ENCODE measurements at regions of chr5 and their contacts with region 1.

Region 1: GRCh38 chr5:139197710-139198669 is at the start of gene SIL1:
- DNase-seq: peak; percentile 86 to 99 (median 96)
- ATAC-seq: peak; percentile 99
- H3K4me3 ChIP-seq: peak within 1 kb of the TSS; percentile 83
- H3K4me3 Mint-ChIP-seq: peak within 1 kb of the TSS; percentile 85
- H3K27ac ChIP-seq: peak within 1 kb of the TSS; percentile 82 to 86
- H3K27ac Mint-ChIP-seq: peak within 1 kb of the TSS; percentile 77
- H3K4me1 ChIP-seq: peaks cover 17% of the 10 kb centered on the region
- H3K4me1 Mint-ChIP-seq: peaks cover 21% of the 10 kb centered on the region
- H3K27me3 ChIP-seq: no peaks in the 10 kb centered on the region
- H3K27me3 Mint-ChIP-seq: no peaks in the 10 kb centered on the region
- CTCF ChIP-seq: no peak
- total RNA-seq, gene SIL1: 5.6 to 9.2 TPM

Region 2: DNA sequence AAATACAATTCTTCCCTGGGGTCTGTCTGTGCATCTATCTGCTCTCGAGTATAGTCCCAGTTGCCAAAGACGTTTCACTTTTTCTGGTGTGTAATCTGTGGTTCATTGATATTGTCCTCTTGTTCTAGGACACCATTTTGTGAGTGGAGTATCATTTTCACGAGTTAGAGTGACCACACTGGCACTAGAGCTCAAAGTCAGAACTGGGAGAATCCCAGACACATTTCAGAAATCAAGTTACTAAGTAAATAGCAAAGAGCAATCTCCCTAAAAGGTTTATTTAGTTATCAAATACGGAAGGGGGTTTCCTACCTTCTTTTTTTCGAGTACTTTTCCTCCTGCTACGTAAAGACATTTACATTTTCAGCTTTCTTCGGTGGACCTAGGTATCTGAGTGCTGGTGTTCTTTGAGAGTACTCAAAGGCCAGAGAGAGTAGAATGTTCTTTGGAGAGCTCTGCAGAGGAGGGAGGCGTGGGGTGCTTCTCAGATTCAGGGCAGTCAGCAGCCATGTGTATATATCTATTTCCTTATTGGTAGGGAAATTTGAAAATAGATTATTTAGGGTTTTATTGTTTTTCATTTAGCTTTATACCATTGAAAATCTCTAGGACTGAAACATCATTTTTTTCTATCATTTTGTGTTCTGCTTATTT is 613.9 kb before region 1 on chr5:
- CTCF ChIA-PET with region 1: interaction called, 3 read pairs
- POLR2A ChIA-PET with region 1: no interaction called
- intact Hi-C with region 1: loop called in 1 of 2 experiments (anchors 5 kb)
- DNase-seq: no peak
- ATAC-seq: no peak
- H3K4me3 ChIP-seq: no peak overlapping the region
- H3K4me3 Mint-ChIP-seq: no peak overlapping the region
- H3K27ac ChIP-seq: no peak overlapping the region
- H3K27ac Mint-ChIP-seq: no peak overlapping the region
- H3K4me1 ChIP-seq: peaks cover 4% of the 10 kb centered on the region
- H3K4me1 Mint-ChIP-seq: peaks cover 4% of the 10 kb centered on the region
- H3K27me3 ChIP-seq: no peaks in the 10 kb centered on the region
- H3K27me3 Mint-ChIP-seq: peaks cover 20% of the 10 kb centered on the region
- CTCF ChIP-seq: no peak

Region 3: GRCh38 chr5:139181835-139182452 is 16.0 kb before region 1 on chr5:
- CTCF ChIA-PET with region 1: no interaction called
- POLR2A ChIA-PET with region 1: no interaction called
- intact Hi-C with region 1: no loop called
- DNase-seq: peak in 2 of 14 experiments; percentile 22 to 23
- ATAC-seq: no peak
- H3K4me3 ChIP-seq: no peak overlapping the region
- H3K4me3 Mint-ChIP-seq: no peak overlapping the region
- H3K27ac ChIP-seq: no peak overlapping the region
- H3K27ac Mint-ChIP-seq: no peak overlapping the region
- H3K4me1 ChIP-seq: peaks cover 4% of the 10 kb centered on the region
- H3K4me1 Mint-ChIP-seq: peaks cover 4% of the 10 kb centered on the region
- H3K27me3 ChIP-seq: no peaks in the 10 kb centered on the region
- H3K27me3 Mint-ChIP-seq: no peaks in the 10 kb centered on the region
- CTCF ChIP-seq: no peak

Region 4: DNA sequence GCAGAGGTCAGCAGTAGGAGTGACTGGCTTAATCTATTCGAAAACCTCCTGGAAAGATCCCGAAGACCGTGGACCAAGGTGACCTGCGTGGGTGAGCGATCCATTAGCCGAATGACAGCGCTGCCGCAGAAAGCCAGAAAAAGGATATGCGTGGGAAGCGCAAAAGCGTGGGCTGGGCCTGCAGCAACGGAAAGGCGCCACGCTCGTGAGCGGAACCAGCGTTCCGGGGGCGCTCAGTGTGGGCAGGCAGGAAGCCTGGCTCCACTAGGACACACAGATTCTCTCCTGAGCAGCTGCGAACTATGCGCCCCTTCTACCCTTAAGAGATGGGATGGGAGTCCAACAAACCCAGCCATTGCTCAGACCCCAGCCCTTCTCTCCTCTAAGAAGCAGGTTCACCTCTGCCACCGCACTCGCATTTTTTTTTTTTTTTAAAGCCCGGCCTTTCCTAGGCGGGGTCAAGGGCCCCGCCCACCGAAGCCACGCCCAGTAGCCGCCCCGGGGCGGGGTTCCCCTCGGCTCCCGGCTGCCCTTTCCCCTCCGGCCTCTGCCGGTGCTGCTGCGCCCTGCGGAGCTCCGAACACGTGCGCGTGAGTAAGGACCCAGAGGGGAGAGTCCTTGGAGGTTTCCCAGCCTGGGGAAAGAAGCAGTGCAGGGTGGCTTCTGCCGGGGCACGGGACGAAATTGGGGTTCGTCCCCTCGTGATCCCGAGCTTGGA is 75.7 kb after region 1 on chr5:
- CTCF ChIA-PET with region 1: no interaction called
- POLR2A ChIA-PET with region 1: no interaction called
- intact Hi-C with region 1: loop called in 1 of 2 experiments (anchors 2 kb)
- DNase-seq: peak; percentile 69 to 93 (median 78)
- ATAC-seq: peak; percentile 86
- H3K4me3 ChIP-seq: peak overlapping the region; percentile 77
- H3K4me3 Mint-ChIP-seq: peak overlapping the region; percentile 78
- H3K27ac ChIP-seq: peak overlapping the region; percentile 38 to 47
- H3K27ac Mint-ChIP-seq: peak overlapping the region; percentile 67
- H3K4me1 ChIP-seq: peaks cover 46% of the 10 kb centered on the region
- H3K4me1 Mint-ChIP-seq: peaks cover 50% of the 10 kb centered on the region
- H3K27me3 ChIP-seq: no peaks in the 10 kb centered on the region
- H3K27me3 Mint-ChIP-seq: no peaks in the 10 kb centered on the region
- CTCF ChIP-seq: no peak

Measured in CD4-positive, alpha-beta T cell (primary cell).